Activated CD4-positive, alpha-beta memory T cell treated with anti-CD3 and anti-CD28 coated beads for 36 hours (primary cell): ENCODE measurements at regions of chr4 and their contacts with region 1.

Region 1: DNA sequence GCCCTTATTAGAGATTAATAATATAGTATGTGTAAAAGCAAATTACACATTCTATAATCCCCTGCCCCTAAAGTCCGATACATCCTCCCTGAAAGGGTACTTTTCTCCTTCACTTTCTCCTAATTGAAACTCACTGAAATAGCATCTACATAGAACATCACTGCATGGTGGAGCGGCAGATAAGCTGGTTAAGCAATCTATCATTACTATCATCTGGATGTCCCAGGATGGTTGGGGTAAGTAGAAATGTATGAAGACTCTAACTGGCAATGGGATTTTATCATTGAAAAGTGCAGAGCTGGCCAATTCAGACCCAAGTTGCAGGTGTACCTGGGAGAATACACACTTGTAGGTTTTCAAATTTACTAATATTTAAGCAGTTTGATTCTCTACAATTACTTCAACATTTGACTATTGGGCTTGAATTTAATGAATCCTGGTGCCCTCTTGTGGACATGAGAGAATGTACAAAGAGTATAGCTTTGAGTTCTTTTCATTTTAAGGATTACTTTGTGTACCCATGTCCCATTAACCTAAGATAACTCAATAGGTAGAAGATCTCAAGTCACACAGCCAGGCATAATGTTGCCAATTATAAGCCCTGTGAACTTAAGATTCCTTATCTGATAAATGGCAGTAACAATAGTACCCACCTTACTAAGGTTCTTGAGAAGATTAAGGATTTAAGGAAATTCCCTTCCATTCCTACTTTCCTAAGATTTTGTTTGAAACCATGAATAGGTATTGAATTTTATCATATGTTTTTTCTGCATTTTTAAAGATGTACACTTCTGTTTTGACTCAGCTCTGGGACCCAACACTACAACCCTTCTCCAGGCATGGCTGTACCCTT is 69.8 kb downstream of the SHROOM3 start:
- DNase-seq: no peak
- H3K4me3 Mint-ChIP-seq: no peak overlapping the region
- H3K27ac Mint-ChIP-seq: no peak overlapping the region
- H3K4me1 Mint-ChIP-seq: no peaks in the 10 kb centered on the region
- H3K27me3 Mint-ChIP-seq: peaks cover 4% of the 10 kb centered on the region

Region 2: GRCh38 chr4:76279472-76279871 is 225.4 kb before region 1 on chr4:
- CTCF ChIA-PET with region 1: interaction called, 8 read pairs
- POLR2A ChIA-PET with region 1: no interaction called
- intact Hi-C with region 1: loop called (anchors 2 kb)
- DNase-seq: peak; percentile 24
- H3K4me3 Mint-ChIP-seq: no peak overlapping the region
- H3K27ac Mint-ChIP-seq: no peak overlapping the region
- H3K4me1 Mint-ChIP-seq: no peaks in the 10 kb centered on the region
- H3K27me3 Mint-ChIP-seq: peaks cover 4% of the 10 kb centered on the region

Region 3: GRCh38 chr4:76476606-76477005 is 28.2 kb before region 1 on chr4:
- CTCF ChIA-PET with region 1: no interaction called
- POLR2A ChIA-PET with region 1: no interaction called
- intact Hi-C with region 1: no loop called
- DNase-seq: no peak
- H3K4me3 Mint-ChIP-seq: no peak overlapping the region
- H3K27ac Mint-ChIP-seq: no peak overlapping the region
- H3K4me1 Mint-ChIP-seq: no peaks in the 10 kb centered on the region
- H3K27me3 Mint-ChIP-seq: peaks cover 22% of the 10 kb centered on the region